ENCODE measurements at regions of chr6 and their contacts with region 1.

Region 1: DNA sequence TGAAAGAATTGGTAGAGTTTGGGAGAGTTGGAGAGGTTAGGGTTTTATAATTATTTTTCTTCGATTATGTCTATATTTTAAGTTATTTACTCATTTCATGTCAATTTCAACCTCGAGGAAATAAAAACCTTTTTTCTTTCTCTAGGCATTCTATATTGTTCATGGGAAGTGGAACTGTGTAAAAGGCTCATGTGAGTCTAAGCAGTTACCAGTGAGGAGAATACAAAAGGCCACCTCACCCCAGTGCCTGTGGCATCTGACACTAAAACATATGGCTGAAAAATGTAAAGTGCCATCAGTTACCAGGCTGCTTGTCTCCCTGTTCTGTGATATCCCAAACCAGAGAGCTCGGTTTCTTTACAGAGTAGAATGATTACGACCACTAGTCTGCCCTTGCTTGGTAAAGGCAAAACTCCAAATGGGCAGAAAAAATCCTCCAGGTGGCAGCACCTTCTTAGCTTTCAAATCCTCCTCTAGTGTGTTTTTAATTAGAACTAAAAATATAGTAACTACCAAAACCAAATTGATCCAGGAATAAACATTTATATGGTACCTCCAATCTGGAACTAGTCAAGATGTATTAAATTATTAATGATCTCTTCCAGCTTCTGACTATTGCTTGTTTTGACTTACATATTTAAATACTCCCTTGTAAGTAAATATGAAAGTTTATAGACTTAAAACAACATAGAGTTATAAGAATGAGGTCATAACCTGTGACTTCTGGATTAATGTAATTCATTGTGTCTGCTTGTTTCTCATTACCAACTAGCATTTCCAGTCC is 122.6 kb upstream of the MCHR2 start:
- DNase-seq: no peak
- H3K4me3 ChIP-seq: no peak overlapping the region
- CTCF ChIP-seq: peak; percentile 50

Region 2: DNA sequence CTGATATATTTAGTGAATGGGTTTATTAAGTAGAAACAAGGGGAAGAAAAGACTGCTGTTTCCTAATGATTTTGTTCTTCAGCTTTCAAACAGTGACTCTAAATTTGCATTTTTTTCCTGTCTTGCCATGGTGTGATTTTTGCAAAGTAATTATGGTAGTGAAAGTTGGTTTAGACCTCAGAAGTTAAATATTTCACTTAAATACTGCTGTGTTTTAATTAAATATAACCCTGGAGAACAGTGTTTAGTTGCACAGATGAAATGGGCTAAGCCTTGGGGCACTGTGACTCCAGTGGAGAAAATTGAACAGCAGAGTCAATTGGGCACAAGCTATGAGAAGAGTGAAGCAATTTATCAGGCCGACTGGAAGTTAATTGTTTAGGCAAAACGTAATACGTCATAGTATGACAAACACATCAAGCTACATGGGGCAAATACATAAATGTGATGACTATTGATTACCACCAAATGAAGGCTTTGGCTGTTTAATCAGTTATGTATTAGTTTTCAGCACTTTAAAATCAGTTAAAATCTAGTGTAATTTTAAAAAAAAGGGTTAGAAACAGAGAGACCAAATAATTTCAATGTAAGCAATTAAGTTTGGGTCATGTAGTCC is 11.4 kb before region 1 on chr6:
- CTCF ChIA-PET with region 1: interaction called, 52 read pairs
- POLR2A ChIA-PET with region 1: no interaction called
- DNase-seq: no peak
- H3K4me3 ChIP-seq: no peak overlapping the region
- CTCF ChIP-seq: no peak

Region 3: GRCh38 chr6:100163035-100163434 is 46.4 kb after region 1 on chr6:
- CTCF ChIA-PET with region 1: interaction called, 10 read pairs
- POLR2A ChIA-PET with region 1: no interaction called
- DNase-seq: no peak
- H3K4me3 ChIP-seq: no peak overlapping the region
- CTCF ChIP-seq: no peak

Region 4: DNA sequence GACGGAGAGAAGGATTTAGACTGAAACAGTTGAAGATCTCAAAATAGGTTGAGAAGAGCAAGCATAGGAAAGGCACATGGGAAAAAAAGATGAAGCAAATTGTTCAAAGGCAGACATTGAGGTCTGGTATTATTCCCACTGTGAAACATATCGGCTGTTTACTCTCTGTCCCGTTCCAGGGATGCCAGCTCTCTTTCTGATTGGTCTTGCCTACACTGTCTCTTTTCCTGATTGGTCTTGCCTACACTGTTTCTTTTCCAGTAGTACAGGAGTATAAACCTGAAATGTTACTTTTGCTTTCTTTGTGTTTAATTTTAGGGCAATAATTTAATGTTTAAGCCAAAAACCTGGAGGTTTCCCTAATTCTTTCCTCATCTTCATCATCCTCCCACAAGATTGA is 103.9 kb after region 1 on chr6:
- CTCF ChIA-PET with region 1: no interaction called
- POLR2A ChIA-PET with region 1: no interaction called
- DNase-seq: no peak
- H3K4me3 ChIP-seq: no peak overlapping the region
- CTCF ChIP-seq: no peak

Region 5: DNA sequence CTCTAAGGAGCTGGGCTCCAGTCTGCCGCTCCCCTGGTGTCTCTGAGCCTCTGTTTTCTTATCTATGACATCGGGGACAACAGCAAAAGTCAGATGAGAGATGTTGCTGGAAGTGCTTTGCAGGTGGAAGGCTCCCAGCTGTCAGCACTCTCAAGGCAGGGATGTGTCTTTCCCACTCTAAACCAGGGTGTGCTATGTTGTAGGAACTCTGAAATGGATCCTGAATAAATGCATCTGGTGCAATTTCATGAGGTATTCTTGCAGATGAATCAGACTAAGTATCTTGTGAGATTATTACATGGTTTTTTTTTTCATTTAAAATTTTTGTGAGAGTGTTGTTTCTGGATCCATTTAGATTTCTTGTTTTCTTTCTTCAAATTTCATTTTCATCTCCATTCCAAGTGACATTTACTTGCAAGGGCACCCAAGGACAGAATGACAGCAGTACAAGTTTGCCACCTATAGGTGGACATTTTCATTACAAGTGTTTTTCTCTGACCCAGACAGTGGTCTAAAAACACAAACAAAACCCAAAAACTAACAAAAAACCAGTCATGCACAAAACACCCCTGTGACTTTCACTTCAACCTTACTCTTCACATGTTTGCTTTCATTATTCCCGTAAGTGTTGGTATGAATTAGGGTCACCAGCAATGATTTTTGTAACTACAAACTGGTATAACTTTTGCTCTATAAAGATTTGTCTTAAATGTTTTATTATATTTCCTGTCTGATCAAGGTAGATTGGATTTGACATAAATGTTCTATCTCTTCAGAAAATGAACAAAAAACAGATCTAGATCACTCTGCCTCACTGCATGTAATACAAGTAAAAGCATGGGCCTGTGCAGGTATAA is 362.8 kb after region 1 on chr6:
- CTCF ChIA-PET with region 1: interaction called, 180 read pairs
- POLR2A ChIA-PET with region 1: no interaction called
- DNase-seq: no peak
- H3K4me3 ChIP-seq: no peak overlapping the region
- CTCF ChIP-seq: peak; percentile 36

Measured in AG04449 (cell line).